IMR-90 (cell line): ENCODE measurements at regions of chr5 and their contacts with region 1.

Region 1: DNA sequence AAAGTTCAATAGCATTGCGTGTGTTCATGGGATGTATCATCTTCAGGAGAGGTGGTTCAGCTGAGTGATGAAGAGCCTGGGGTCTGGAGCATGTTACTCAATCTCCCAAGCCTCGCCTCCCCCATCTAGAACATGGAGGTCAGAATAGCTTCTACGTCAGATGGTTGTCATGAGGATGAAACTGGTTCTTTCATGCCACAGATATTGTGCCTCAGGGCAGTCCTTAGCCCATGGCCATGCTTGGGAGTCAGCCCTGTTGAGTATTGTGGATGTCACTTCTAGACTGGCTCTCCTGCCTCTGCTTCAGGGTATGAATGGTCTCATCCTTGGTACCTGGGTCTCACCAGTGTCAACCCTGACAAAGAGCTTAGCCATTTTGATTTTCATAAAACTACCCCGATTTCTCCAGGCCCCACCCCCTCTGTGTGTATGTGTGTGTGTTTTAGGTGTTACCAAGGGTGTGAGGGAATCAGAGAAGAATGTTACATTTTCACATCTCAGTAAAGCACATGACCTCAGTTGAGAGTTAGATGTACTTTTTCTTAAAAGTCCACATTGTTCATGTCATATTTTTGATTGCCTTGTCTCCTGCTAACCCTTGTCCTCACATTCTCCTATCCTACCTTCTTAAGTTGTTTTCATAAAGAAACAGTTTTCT is 97.8 kb upstream of the CD180 start:
- DNase-seq: no peak
- ATAC-seq: no peak
- H3K4me3 ChIP-seq: no peak overlapping the region
- H3K27ac ChIP-seq: no peak overlapping the region
- H3K4me1 ChIP-seq: peaks cover 2% of the 10 kb centered on the region
- H3K27me3 ChIP-seq: no peaks in the 10 kb centered on the region
- CTCF ChIP-seq: no peak
- POLR2A ChIP-seq: no peak
- RAD21 ChIP-seq: no peak

Region 2: GRCh38 chr5:68196876-68197275 is 902.5 kb after region 1 on chr5:
- CTCF ChIA-PET with region 1: no interaction called
- POLR2A ChIA-PET with region 1: no interaction called
- dilution Hi-C with region 1: no loop called
- in situ Hi-C with region 1: no loop called
- intact Hi-C with region 1: no loop called
- DNase-seq: no peak
- ATAC-seq: no peak
- H3K4me3 ChIP-seq: no peak overlapping the region
- H3K27ac ChIP-seq: no peak overlapping the region
- H3K4me1 ChIP-seq: no peaks in the 10 kb centered on the region
- H3K27me3 ChIP-seq: peaks cover 2% of the 10 kb centered on the region; the same call in 1 of the 2 replicates
- CTCF ChIP-seq: no peak
- POLR2A ChIP-seq: no peak
- RAD21 ChIP-seq: no peak

Region 3: DNA sequence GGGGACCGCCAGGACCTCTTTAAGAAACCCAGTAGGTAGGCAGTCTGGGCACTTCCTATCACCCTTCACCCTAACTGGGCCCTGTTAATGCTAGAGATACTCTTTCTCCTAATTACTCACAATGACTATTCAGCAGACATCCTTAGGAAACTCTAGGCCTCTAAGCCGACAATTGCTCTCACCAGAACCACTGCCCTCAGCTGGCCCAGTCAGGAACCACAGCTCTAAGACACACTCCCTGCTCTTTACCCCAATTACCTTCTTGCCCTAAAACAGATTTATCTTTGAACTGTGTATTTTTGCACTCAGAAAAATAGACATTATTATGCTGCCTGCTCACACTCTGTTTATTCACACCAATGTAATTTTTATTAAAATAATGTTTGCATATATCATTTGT is 1366.8 kb after region 1 on chr5:
- CTCF ChIA-PET with region 1: no interaction called
- POLR2A ChIA-PET with region 1: interaction called, 15 read pairs
- dilution Hi-C with region 1: no loop called
- in situ Hi-C with region 1: no loop called
- intact Hi-C with region 1: no loop called
- DNase-seq: peak; percentile 22
- ATAC-seq: 0 out of 2 replicates have a peak, but pooled peaks have one; percentile 40
- H3K4me3 ChIP-seq: no peak overlapping the region
- H3K27ac ChIP-seq: no peak overlapping the region
- H3K4me1 ChIP-seq: no peaks in the 10 kb centered on the region
- H3K27me3 ChIP-seq: no peaks in the 10 kb centered on the region
- CTCF ChIP-seq: peak; percentile 32
- POLR2A ChIP-seq: no peak
- RAD21 ChIP-seq: peak; percentile 39